Mammary epithelial cell (primary cell): ENCODE measurements at regions of chr20 and their contacts with region 1.

Region 1: DNA sequence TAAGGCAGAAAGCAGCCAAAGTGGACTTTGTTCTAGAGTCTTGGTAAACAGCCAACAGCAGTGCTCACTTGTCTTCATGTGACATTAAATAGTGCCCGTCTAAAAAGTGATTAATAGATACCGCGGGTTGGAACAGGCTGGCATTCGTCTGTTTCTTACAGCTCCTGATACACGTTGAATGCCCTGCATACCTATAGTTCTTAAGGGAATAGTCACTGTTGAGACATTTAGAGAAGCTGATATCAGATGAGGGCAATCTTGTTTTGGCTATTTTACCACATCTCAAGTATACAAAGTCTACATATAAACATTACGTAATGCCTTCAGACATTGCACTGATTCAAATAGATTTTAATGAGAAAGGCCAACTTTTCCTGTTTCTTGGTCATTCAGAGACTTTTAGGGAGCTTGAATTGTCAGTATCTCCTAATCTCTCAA is 374.9 kb upstream of the FLRT3 start:
- DNase-seq: peak; percentile 82
- H3K4me3 ChIP-seq: no peak overlapping the region
- H3K27ac ChIP-seq: peak overlapping the region; percentile 64
- H3K4me1 ChIP-seq: peaks cover 25% of the 10 kb centered on the region
- H3K27me3 ChIP-seq: no peaks in the 10 kb centered on the region
- CTCF ChIP-seq: peak in 1 of 2 donors; percentile 1

Region 2: GRCh38 chr20:14142171-14142570 is 570.1 kb before region 1 on chr20:
- CTCF ChIA-PET with region 1: no interaction called
- dilution Hi-C with region 1: no loop called
- in situ Hi-C with region 1: no loop called
- intact Hi-C with region 1: loop called (anchors 5 kb)
- DNase-seq: peak; percentile 66
- H3K4me3 ChIP-seq: no peak overlapping the region
- H3K27ac ChIP-seq: no peak overlapping the region
- H3K4me1 ChIP-seq: peaks cover 6% of the 10 kb centered on the region
- H3K27me3 ChIP-seq: no peaks in the 10 kb centered on the region
- CTCF ChIP-seq: peak; percentile 70 to 78

Region 3: DNA sequence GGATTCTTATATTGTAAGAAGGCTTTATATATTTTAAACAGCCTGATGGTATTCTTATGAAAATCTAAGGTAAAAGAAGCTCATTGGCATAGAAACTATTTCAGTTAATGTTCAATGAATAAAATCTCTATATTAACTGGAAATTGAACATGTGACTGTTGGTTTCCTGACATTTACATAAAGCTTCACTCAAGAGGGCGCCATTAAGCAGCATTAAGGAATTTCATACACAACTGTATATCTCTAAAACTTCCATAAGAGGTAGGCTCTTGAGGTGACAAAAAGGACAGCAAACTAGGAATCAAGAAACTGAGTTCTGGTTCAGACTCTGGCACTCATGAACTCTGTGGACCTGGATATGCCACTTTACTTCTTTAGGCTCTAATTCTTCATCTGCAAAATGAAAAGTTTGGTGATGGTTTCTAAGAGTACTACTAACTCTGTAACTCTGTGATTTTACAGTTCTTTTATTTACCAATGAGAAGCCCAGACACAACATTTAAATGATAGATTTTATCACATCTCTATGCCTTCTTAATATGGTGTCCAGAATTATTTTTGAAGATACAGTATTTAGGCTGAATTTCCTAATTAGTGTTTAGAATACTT is 522.4 kb before region 1 on chr20:
- CTCF ChIA-PET with region 1: no interaction called
- dilution Hi-C with region 1: no loop called
- in situ Hi-C with region 1: no loop called
- intact Hi-C with region 1: loop called (anchors 5 kb)
- DNase-seq: peak; percentile 44
- H3K4me3 ChIP-seq: no peak overlapping the region
- H3K27ac ChIP-seq: no peak overlapping the region
- H3K4me1 ChIP-seq: peaks cover 5% of the 10 kb centered on the region
- H3K27me3 ChIP-seq: no peaks in the 10 kb centered on the region
- CTCF ChIP-seq: peak; percentile 52 to 65

Region 4: DNA sequence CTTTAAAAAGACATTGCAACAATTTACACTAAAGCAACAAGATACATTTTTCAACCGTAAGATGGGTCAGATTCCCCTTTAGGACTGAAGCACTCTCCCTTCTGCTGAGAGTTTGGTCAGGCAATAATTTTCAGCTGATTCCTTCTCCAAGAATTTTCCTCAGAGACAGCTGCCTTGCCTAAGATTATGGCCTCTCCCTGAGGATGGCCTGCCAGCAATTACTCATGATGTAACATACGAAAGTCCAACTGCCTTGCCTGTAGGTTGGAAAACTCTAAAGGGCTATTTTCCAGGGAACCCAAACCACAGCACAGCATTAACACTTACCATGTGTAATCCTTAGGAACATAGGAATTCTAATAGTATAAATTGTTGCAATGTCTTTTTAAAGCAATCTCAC is 145.8 kb before region 1 on chr20:
- CTCF ChIA-PET with region 1: no interaction called
- dilution Hi-C with region 1: no loop called
- in situ Hi-C with region 1: no loop called
- intact Hi-C with region 1: no loop called
- DNase-seq: no peak
- H3K4me3 ChIP-seq: no peak overlapping the region
- H3K27ac ChIP-seq: no peak overlapping the region
- H3K4me1 ChIP-seq: peaks cover 13% of the 10 kb centered on the region
- H3K27me3 ChIP-seq: no peaks in the 10 kb centered on the region
- CTCF ChIP-seq: no peak

Region 5: DNA sequence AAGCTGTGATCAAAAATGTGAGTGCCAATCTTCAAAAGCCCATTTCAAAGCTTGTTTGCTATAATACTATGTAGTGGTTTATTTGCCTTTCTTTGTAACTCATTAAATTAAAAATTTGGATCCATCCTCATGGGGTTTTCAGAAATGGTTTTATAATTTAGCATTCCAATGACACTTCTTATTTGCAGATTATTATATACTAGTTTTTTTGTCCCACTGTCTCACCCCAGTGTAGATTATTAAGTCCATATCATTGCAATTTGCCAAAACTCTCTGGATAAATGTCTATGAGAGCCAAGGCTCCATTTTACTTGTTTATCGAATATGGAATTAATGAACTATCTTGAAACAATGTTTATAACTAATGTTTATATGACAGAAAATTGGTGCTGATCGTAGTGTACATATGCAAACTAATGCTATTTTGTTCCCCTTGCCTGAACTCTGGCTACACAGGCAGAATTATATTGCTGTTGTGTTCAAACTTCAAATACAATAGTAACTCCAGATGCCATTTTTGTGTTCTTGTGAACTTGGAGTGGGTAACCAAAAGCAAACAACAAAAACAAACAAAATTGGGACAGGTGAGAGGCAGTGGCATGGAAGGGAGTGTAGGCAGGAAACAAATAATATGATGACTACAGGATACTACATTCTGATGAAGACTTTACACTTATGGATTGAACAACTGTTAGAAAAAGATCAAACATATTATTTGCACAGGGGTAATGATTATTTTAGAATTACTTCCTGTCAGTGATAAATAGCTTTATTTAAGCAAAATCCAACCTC is 67.8 kb before region 1 on chr20:
- CTCF ChIA-PET with region 1: no interaction called
- dilution Hi-C with region 1: no loop called
- in situ Hi-C with region 1: no loop called
- intact Hi-C with region 1: no loop called
- DNase-seq: no peak
- H3K4me3 ChIP-seq: no peak overlapping the region
- H3K27ac ChIP-seq: no peak overlapping the region
- H3K4me1 ChIP-seq: no peaks in the 10 kb centered on the region
- H3K27me3 ChIP-seq: no peaks in the 10 kb centered on the region
- CTCF ChIP-seq: no peak

Region 6: DNA sequence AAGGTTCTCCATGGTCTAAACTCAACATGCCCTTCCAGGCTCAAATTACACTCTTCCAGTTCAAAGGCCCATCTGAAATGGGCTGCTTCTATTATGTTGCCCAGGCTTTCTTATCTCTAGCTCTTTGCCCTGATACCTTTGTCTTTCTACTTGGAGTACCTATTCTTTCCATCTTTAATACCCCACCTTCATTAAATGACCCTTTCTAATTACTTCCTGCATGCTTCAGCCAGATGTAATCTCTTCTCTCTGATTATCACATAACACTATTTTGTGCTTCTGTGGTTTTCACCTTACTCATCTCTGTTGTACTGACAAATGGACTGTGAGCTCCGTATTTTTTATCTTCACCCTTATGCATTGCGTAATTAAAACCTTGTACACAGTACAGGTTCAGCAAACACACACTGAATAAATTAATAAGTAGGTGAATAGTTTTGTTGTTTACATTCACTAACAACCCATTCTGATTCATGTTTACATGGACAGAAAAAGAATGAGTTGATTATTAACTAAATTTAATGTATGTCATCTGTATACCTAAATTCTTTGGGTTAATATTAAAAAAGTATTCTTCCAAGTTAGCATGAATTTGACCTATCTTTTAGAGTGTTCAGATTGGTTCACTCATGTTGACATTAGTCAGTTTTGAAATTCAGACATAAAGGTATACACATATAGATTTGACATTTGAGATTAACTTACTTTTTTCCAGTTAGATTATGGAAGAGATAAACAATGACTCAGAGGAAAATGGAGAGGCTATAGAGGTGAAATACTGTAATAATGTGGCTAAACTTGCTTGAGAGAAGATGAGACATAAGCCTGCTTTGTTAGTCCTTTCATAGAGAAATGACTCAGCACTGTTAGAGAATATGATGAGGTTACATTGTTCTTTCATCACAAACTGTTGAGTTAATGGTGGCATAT is 166.7 kb after region 1 on chr20:
- CTCF ChIA-PET with region 1: no interaction called
- dilution Hi-C with region 1: no loop called
- in situ Hi-C with region 1: no loop called
- intact Hi-C with region 1: loop called (anchors 2 kb)
- DNase-seq: peak; percentile 95
- H3K4me3 ChIP-seq: no peak overlapping the region
- H3K27ac ChIP-seq: peak overlapping the region; percentile 85
- H3K4me1 ChIP-seq: peaks cover 47% of the 10 kb centered on the region
- H3K27me3 ChIP-seq: no peaks in the 10 kb centered on the region
- CTCF ChIP-seq: no peak

Region 7: DNA sequence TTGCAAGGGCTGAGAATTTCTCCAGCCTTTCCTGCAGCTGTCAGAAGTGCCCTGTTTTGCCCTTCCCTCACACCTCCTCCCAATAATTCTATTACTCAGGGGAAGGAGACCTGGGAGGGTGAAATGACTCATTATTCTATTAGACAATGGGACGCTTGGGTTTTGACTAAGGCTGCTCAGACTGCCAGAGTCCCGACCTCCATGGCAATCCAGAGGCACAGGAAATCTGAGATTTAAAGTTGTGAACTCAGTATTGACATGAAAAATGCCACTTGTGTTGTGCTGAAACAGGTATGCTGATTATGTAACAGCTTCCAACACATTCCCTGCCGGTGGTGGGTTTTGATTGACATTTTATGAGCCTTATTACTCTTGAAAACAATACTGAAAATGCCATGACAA is 250.9 kb after region 1 on chr20:
- CTCF ChIA-PET with region 1: no interaction called
- dilution Hi-C with region 1: no loop called
- in situ Hi-C with region 1: no loop called
- intact Hi-C with region 1: loop called (anchors 5 kb)
- DNase-seq: peak; percentile 88
- H3K4me3 ChIP-seq: peak overlapping the region in 2 of 3 experiments; percentile 3 to 36
- H3K27ac ChIP-seq: peak overlapping the region; percentile 85
- H3K4me1 ChIP-seq: peaks cover 21% of the 10 kb centered on the region
- H3K27me3 ChIP-seq: no peaks in the 10 kb centered on the region
- CTCF ChIP-seq: no peak

Region 8: DNA sequence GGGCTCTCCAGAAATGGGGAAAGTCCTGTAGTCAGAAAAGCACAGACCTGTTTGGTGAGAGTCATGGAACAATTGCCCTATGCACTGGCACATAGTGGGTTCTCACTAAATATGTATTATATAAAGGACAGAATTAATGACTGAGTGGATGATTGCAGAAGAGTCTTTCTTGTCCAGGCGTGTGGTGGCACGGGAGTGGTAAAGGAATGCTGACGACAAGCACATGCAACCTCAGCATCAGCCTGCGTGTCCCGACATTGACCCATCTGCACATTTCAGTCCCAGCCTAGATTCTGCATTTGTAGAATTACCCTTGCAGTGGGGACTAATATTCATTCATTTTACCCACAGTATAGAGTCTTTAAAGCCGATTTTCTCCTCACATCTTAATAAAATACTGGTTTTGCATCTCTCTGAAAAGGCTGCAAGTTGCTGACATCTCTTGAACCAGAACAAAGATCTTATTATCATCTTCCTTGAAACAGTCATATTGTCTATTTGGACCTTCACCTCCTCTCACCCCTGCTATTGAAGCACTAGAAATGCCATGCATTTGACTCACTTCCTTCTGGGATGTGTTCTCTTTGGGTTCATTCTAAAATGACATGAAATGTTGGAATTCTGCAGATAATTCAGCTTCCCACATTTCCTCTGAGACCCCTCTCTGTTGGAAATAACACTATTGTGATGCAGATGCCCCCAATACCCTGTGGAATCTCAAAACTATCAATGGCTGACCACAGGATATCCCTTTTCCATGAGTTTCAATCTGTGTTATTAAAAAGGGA is 508.7 kb after region 1 on chr20:
- CTCF ChIA-PET with region 1: no interaction called
- dilution Hi-C with region 1: no loop called
- in situ Hi-C with region 1: no loop called
- intact Hi-C with region 1: loop called (anchors 2 kb)
- DNase-seq: peak; percentile 71
- H3K4me3 ChIP-seq: no peak overlapping the region
- H3K27ac ChIP-seq: peak overlapping the region; percentile 79
- H3K4me1 ChIP-seq: peaks cover 25% of the 10 kb centered on the region
- H3K27me3 ChIP-seq: no peaks in the 10 kb centered on the region
- CTCF ChIP-seq: no peak